Gastrocnemius medialis (tissue), 4 donors: ENCODE measurements at regions of chr2 and their contacts with region 1.

Region 1: DNA sequence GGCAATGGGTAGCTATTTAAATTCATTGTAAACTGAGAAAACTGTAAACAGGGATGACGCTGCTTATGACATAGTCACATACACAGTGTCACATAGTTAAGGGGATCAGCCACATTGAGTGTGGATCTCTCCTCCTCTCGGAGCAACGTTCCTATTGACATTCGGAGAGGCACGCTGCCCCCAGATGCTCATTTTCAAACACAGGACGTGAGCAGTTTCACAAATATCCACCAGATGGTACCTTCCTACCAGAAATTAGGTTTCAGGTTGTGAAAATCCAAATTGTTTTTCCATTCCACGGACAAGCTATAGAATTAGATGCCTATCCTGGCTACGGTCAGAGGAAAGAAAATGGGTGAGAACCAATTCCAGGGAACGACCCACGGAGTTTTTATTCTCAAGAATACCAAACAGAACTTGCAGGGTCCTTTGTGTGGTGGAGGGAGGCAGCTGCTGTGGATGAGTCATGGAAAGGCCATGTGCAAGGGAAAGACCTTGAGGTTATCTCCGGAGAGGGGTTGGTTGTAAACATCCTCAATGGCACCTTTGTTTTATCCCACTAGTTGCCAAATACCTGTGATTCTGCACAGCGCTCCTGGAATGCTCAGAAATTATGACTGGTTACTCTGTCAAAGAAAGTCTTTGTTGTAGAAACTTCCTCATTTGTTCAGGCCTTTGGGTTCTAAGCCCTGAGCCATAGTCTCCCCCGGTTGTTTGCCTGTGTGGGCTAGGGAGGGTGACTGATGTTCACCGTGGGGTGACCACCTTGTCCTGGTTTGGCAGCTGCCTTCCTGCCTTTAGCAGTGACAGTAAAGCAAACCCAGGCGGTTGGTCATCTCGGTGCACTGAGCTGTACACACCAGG is 88.0 kb downstream of the ACTR3 start:
- DNase-seq: no peak
- ATAC-seq: no peak
- H3K4me3 ChIP-seq: no peak overlapping the region
- H3K27ac ChIP-seq: no peak overlapping the region
- H3K4me1 ChIP-seq: no peaks in the 10 kb centered on the region
- H3K27me3 ChIP-seq: no peaks in the 10 kb centered on the region
- CTCF ChIP-seq: peak in 1 of 5 experiments; percentile 6
- POLR2A ChIP-seq: no peak

Region 2: DNA sequence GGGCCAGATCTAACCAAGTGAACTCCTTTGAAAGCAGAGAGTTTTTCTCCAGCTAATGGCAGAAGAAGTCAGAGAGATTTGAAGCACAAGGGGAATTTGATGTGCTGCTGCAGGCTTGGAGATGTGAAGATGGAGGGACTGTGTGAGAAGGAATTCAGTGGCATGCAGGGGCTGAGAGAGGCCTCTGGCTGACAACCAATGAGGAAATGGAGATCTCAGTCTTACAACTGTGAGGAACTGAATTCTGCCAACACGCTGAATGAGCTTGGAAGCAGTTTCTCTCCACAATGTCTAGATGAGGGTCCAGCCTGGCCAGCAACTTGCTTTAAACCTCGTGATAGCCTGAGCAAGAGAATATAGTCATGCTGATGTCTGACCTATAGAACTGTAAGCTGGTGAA is 240.5 kb after region 1 on chr2:
- in situ Hi-C with region 1: no loop called
- intact Hi-C with region 1: no loop called
- DNase-seq: no peak
- ATAC-seq: no peak
- H3K4me3 ChIP-seq: no peak overlapping the region
- H3K27ac ChIP-seq: no peak overlapping the region
- H3K4me1 ChIP-seq: no peaks in the 10 kb centered on the region
- H3K27me3 ChIP-seq: no peaks in the 10 kb centered on the region
- CTCF ChIP-seq: no peak
- POLR2A ChIP-seq: no peak

Region 3: GRCh38 chr2:114550895-114551793 is 573.3 kb after region 1 on chr2:
- in situ Hi-C with region 1: loop called in 1 of 4 experiments (anchors 10 kb)
- intact Hi-C with region 1: loop called (anchors 10 kb)
- DNase-seq: no peak
- ATAC-seq: no peak
- H3K4me3 ChIP-seq: no peak overlapping the region
- H3K27ac ChIP-seq: no peak overlapping the region
- H3K4me1 ChIP-seq: no peaks in the 10 kb centered on the region
- H3K27me3 ChIP-seq: no peaks in the 10 kb centered on the region
- CTCF ChIP-seq: peak in 3 of 5 experiments; percentile 32 to 49 (median 42)
- POLR2A ChIP-seq: no peak